A673 (cell line): ENCODE measurements at regions of chr14 and their contacts with region 1.

Region 1: DNA sequence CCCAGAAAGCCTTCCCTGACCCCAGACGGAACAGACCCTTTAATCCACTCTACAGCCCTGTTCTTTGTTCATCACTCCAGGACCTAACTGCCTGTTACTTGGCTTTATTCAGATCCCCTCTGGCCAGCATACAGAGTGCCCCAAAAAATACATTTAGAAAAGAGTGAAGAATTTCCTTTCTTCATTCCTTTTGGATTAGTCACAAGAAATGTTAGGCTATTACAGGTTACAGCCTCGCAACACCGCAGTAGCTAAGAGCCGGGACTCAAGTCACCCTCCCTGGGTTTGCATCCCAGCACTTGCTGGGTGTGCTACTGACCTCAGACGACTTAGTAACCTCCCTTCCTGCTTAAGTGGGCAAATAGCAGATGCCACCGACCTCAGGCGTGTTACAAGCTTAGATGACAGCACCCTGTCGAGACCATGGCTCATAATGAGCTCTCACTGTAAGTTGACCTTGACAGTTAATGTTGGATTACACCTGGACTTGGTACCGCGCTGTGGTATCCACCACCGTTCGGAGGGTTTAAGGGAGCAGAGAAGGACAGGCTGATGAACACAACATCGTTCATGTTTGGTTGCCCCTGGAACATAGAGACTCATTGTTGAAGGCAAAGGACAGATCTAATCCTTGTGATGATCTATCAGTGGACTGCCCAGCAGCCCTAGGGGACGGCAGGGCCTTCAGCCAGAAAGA is 12.9 kb downstream of the GLRX5 start:
- DNase-seq: no peak
- H3K4me3 ChIP-seq: no peak overlapping the region
- H3K27ac ChIP-seq: no peak overlapping the region
- H3K4me1 ChIP-seq: no peaks in the 10 kb centered on the region
- H3K27me3 ChIP-seq: no peaks in the 10 kb centered on the region
- CTCF ChIP-seq: no peak

Region 2: DNA sequence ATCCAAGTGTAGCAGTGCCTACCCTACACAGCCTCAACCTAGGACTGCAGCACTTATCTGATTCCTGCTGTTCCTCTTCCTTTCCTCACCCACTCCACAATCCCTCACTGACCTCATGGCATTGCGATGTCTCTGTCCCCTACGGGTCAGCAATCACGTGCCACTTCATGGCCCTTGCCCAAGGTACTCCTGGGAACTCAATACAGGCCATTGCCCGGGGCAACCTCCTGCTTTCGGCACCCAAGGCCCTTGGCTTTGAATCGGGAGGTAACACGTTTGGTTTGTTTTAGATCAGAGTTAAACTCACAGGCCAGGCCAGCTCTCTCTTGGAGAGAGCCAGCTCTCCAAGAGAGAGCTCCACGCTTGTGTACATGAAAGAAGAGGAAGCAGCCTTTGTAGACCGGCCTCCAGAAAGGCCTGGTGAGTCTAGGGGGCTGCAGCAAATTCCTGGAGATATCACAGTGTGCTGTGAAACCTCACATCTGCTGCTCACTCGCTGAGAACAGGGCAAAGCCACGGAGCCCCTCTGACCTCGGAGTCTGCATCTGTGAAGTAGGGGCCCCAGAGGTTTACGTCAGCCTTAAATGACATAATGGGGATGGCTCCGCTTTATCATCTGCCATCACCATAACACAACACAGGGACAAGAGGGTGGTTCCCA is 240.2 kb before region 1 on chr14:
- CTCF ChIA-PET with region 1: no interaction called
- POLR2A ChIA-PET with region 1: no interaction called
- intact Hi-C with region 1: no loop called
- DNase-seq: no peak
- H3K4me3 ChIP-seq: no peak overlapping the region
- H3K27ac ChIP-seq: no peak overlapping the region
- H3K4me1 ChIP-seq: peaks cover 17% of the 10 kb centered on the region
- H3K27me3 ChIP-seq: no peaks in the 10 kb centered on the region
- CTCF ChIP-seq: no peak

Region 3: GRCh38 chr14:95507701-95508103 is 40.1 kb before region 1 on chr14:
- CTCF ChIA-PET with region 1: no interaction called
- POLR2A ChIA-PET with region 1: interaction called, 10 read pairs
- intact Hi-C with region 1: no loop called
- DNase-seq: no peak
- H3K4me3 ChIP-seq: no peak overlapping the region
- H3K27ac ChIP-seq: no peak overlapping the region
- H3K4me1 ChIP-seq: no peaks in the 10 kb centered on the region
- H3K27me3 ChIP-seq: no peaks in the 10 kb centered on the region
- CTCF ChIP-seq: no peak